ENCODE measurements at regions of chr5 and their contacts with region 1.

Region 1: GRCh38 chr5:172984243-172984953 is 827 bp downstream of the ATP6V0E1 start:
- DNase-seq: peak; percentile 79

Region 2: DNA sequence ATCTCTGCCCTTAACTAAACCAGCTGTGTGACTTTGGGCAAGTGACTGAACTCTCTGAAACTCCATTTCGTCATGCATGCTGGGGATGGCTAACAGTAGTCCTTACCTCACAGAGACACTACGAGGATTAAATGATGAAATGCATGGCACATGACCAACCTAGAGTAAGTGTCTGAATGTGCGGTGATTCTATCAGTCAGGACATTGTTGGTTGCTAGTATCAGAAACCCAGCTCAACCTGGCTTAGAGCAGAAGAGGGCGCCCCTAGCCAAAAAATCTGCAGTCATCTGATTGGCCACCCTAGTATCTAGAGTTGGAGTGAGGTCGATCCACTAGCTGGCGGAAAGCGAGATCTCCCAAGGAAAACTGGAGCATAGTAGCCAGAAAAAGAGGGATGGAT is 318.1 kb before region 1 on chr5:
- intact Hi-C with region 1: no loop called
- DNase-seq: no peak

Region 3: GRCh38 chr5:172881691-172882370 is 102.6 kb before region 1 on chr5:
- intact Hi-C with region 1: no loop called
- DNase-seq: no peak

Region 4: DNA sequence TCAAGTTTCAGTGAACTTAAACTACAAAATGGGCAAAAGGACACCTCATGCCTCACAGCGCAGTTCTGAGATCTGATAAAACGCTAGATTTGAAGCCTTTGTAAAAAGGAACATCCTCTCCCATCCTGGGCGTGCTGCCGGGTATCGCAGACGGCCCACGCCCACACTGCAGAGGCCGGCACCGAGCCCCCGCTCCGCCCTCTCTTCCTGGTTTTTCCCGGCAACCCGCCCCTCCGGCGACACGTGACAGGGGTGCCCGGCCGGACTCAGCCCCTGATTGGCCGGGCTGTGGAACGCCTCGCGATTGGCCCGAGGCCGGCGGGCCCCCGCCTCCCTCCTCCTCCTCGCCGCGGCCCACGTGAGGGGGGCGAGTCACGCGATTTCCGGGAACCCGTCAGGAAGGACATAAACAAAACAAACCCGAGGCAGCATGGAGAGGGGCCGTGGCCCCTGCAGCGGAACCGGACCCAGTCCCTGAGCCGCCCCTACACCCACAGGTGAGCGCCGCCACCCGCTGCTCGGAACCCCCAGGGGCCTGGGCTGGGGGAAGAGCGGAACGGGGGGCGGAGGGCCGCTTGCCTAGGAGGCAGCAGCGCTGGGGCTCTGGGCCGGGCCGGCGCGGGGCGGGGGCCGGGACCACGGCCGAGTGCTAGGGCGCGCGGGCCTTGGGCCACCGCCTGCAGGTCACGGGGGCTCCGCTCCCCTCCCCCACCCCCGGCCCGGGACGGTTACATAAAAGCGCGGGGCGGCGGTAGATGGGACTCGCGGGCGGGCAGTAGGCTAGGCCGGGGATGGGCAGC is 71.8 kb after region 1 on chr5 and contains the start of gene CREBRF:
- intact Hi-C with region 1: loop called (anchors 1 kb)
- DNase-seq: peak; percentile 99
- total RNA-seq, gene CREBRF: 20.2 TPM

Region 5: DNA sequence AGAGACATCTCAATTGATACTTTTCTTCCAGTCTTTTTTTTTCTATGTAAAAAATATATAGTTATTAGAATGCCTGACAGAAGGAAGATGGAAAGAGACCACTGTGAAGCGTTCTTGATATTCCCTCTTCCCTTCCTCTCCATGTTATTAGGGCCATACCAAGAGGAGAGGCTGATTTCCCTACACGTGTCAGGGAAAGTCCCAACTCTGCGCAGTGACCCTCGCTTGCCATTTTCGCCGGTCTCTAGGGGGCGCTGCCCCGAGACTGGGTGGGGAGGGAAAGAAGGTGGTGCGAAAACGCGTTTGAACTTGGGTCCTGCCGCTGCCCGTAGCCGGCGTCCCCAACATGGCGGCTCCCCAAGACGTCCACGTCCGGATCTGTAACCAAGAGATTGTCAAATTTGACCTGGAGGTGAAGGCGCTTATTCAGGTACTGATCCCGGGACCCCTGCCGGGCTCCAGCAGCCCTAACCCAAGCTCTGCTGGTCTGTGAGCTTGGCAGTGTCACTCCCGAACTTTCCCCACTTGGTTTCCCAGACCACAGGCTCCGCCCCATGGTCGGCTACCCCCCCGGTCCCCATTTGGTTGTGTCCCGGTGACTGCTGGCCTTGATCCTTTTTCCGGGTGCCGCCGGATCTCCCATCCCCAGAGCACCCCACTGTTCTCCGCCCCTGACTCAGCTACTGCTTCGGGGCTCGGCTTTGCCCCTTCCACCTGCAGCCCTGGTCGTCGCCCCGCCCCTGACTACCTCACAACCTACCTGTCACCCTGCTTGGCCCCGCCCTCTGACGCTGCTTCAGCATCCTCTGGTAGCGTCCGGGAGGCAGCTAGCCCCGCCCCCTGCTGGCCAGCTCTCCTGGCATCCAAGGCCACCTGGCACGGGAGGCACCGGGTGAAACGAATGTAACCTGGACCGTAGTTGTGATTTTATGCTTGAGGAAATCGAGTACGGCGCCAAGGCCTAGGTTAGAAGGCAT is 160.1 kb after region 1 on chr5 and contains the start of gene BNIP1:
- intact Hi-C with region 1: loop called (anchors 5 kb)
- DNase-seq: peak; percentile 95
- total RNA-seq, gene BNIP1: 11.1 TPM

Region 6: GRCh38 chr5:173513521-173513991 is 529.2 kb after region 1 on chr5:
- intact Hi-C with region 1: no loop called
- DNase-seq: no peak